Posterior cingulate gyrus (tissue), 11 donors: ENCODE measurements at regions of chr7 and their contacts with region 1.

Region 1: DNA sequence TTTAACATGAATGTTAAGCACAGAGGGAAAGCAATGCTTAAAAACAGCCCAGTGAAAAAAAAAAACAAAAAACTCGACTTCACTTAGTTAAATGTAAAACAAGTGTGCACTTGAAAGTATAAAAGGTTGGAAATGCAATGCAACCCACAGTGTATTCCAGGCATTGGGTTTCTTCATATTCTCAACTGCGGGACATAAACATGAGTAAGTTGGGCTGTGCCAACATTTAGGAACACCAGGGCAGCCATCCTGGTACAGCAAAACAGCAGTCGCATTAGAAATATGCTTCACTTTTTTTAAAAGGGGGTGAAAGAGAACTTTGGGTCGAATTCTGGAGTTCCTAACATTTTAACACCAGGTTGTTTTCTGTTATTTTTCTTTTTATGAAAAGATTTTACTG is 937 bp downstream of the STEAP1 start:
- DNase-seq: no peak

Region 2: DNA sequence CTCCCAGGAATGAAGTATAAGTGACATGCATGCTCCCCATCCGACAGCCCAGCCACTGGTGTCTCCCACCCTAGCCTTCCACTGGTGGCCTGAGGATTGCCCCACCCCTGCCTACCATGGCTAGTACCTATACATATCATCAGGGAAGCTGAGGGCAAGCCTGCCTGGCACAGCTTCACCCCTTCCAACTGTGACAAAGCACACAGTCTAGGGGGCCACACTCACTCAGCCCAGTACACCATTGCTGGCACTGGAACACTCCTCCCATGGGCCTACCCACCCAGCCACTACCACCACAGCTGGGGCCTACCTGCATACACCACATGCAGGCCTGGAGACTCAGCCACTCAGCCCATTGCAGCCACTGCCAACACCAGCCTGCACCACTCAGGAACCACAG is 394.0 kb before region 1 on chr7:
- intact Hi-C with region 1: no loop called
- DNase-seq: peak in 2 of 10 donors; percentile 74 to 75

Region 3: DNA sequence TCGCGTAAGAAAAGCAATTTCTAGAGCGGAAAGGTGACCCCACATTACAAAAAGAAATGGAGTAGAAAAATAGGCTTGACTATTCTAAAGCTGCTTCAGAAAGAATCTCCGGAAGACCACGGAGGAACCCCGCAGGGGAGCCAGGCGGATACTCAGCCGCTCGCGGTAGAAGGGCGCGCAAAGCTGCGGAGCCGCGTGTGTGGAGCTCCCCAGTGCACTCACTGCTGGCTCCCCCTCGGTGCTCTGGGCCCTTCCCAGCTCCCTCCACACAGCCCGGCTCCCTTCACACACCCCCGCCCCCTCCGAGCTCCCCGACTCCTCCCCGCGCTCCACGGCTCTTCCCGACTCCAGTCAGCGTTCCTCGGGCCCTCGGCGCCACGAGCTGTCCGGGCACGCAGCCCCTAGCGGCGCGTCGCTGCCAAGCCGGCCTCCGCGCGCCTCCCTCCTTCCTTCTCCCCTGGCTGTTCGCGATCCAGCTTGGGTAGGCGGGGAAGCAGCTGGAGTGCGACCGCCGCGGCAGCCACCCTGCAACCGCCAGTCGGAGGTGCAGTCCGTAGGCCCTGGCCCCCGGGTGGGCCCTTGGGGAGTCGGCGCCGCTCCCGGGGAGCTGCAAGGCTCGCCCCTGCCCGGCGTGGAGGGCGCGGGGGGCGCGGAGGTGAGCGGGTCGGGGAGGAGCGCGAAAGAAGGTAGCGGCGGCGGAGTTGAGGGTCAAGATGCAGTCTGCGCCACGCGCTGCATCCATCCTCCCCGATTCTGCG is 56.4 kb after region 1 on chr7 and contains the start of gene STEAP2:
- intact Hi-C with region 1: loop called (anchors 10 kb)
- DNase-seq: peak; percentile 55 to 97 (median 86)

Region 4: DNA sequence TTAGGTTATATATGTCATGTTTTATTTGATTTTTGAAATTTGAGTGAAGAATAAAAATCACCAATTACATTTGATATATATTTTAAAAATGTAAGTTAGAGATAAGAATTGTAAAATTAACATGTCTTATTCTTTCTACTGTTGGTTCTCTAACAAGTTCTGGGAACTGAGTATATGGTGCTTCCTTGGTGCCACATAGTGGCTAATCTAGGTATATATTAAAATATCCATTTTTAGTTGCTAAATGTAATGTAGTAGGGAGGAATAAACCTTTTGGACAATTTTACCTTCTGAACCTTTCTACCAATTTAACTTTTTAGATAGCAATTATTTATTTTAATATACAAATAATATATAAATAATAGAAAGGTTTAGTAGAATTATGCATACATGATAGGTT is 107.2 kb after region 1 on chr7:
- intact Hi-C with region 1: loop called (anchors 5 kb)
- DNase-seq: no peak

Region 5: DNA sequence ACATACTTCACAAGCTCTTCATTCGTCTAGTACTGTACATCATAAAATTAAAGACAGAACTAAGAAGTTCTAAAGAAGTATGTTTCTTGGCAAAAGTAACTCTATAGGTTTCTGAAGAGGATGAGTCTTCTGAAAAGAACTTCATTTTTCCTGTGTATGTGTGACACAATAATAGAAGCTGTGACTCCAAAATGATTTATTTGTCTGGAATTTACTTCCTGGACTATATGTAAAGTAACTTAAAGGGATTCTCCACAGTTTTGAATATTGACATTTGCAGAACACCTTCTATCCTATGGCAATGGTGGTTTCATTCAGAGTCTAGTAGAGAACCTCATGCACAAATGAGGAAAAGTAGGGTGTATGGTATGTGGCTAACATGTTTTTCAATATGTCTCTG is 228.2 kb after region 1 on chr7:
- intact Hi-C with region 1: no loop called
- DNase-seq: no peak